ENCODE measurements at regions of chr17 and their contacts with region 1.

Region 1: DNA sequence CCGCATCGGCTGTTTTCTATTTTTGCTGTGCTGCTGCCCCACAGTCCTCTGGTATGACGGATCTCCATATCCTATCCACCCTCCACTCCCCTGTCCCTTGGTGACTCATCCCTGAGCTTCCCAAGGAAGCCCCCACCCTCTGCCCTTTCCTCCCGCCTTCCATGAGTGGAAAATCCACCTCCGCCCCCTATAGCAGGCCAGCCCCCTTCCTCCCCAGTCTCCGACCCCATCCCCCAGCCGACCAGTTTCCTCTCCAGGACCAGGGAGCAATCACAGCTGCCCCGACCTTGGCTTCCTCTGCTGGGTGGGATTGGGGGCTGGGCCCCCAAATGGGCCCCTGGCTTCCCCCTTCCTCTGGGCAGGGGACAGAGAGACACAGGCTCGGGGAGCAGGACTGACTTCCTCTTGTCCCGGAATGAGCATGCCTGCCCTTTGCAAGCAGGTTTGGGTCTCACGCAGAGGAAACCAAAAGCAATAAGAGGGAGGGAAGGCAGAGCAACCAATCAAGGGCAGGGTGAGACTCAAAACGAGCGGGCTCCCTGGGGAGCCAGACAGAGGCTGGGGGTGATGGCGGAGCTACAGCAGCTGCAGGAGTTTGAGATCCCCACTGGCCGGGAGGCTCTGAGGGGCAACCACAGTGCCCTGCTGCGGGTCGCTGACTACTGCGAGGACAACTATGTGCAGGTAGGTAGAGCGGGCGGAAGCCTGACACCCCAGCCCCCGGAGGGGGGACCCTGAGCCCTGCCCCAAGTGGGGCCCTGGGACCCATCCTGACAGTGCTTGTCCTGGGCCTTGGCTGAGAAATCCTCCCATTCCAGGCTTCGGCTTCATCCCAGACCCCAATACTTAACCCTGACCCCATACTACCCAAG is at the starts of genes ABI3 and GNGT2:
- DNase-seq: peak; percentile 39 to 84 (median 53)
- ATAC-seq: peak; percentile 88
- H3K4me3 ChIP-seq: peak within 1 kb of the TSS; percentile 67
- H3K4me3 Mint-ChIP-seq: peak within 1 kb of the TSS; percentile 95
- H3K27ac ChIP-seq: peak within 1 kb of the TSS; percentile 53 to 70
- H3K27ac Mint-ChIP-seq: peak within 1 kb of the TSS; percentile 73
- H3K4me1 ChIP-seq: peaks cover 80% of the 10 kb centered on the region
- H3K4me1 Mint-ChIP-seq: peaks cover 70% of the 10 kb centered on the region
- H3K27me3 ChIP-seq: no peaks in the 10 kb centered on the region
- H3K27me3 Mint-ChIP-seq: no peaks in the 10 kb centered on the region
- CTCF ChIP-seq: no peak
- total RNA-seq, gene ABI3: 5.6 to 5.8 TPM
- total RNA-seq, gene GNGT2: 2.3 to 2.4 TPM

Region 2: DNA sequence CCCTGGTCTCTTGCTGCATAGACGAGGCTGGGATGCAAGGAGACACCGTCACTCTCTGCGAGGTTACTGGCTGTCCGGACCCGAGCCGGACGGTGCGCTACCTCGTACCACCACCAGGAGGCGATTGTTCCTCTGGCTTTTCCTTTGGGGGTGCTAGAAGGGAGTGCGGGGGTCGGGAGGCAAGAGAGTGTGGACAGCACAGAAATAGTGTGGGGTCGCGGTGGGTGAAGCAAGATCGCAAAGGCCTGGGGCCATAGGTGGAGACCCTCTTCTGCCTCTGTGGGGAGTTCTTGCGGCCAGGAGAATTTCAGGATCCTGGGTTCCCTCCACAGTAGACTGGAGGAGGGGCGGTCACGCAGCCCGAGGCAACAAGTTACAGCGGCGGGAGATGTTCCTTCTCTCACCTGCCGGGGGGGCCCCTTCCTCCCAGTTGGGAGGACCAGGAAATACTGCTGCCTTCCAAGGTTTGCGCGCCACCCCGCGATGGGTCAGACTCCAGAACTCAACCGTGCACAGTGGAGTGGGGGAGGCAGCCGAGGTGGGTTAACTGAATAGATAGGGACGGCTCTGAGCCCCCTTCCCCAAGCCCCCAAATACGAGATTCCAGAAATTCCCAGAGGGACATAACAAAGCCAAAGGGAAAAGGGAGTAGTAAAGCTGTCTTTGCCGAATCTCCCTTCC is 13.3 kb after region 1 on chr17:
- CTCF ChIA-PET with region 1: interaction called, 6 read pairs
- POLR2A ChIA-PET with region 1: interaction called, 20 read pairs
- intact Hi-C with region 1: loop called in 1 of 2 experiments (anchors 2 kb)
- DNase-seq: peak; percentile 46 to 78 (median 59)
- ATAC-seq: peak; percentile 23
- H3K4me3 ChIP-seq: peak overlapping the region; percentile 49
- H3K4me3 Mint-ChIP-seq: peak overlapping the region; percentile 74
- H3K27ac ChIP-seq: no peak overlapping the region
- H3K27ac Mint-ChIP-seq: peak overlapping the region; percentile 43
- H3K4me1 ChIP-seq: peaks cover 52% of the 10 kb centered on the region
- H3K4me1 Mint-ChIP-seq: peaks cover 40% of the 10 kb centered on the region
- H3K27me3 ChIP-seq: peaks cover 0 to 4% of the 10 kb centered on the region in 2 experiments
- H3K27me3 Mint-ChIP-seq: peaks cover 7% of the 10 kb centered on the region
- CTCF ChIP-seq: peak; percentile 85

Region 3: DNA sequence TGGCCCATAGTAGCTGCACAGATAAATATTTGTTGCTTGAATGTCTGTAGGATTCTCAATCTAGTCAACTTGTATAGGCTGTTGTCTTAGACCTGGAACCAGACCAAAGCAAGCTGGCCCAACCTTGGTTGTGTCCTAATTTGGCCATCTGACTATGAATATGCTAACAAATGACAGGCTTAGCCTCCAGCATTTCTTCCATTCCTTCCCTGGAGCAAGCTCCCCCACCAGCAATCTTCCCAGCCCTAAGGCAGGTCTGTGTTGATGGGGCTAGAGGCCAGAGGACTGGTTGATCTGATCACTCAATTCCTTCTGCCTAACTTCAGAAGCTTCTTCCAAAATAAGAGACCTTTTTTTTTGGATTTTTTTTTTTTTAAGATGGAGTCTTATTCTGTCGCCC is 29.6 kb after region 1 on chr17:
- CTCF ChIA-PET with region 1: no interaction called
- POLR2A ChIA-PET with region 1: no interaction called
- intact Hi-C with region 1: no loop called
- DNase-seq: no peak
- ATAC-seq: no peak
- H3K4me3 ChIP-seq: no peak overlapping the region
- H3K4me3 Mint-ChIP-seq: no peak overlapping the region
- H3K27ac ChIP-seq: no peak overlapping the region
- H3K27ac Mint-ChIP-seq: no peak overlapping the region
- H3K4me1 ChIP-seq: no peaks in the 10 kb centered on the region
- H3K4me1 Mint-ChIP-seq: no peaks in the 10 kb centered on the region
- H3K27me3 ChIP-seq: no peaks in the 10 kb centered on the region
- H3K27me3 Mint-ChIP-seq: peaks cover 7% of the 10 kb centered on the region
- CTCF ChIP-seq: no peak